ENCODE measurements at regions of chr5 and their contacts with region 1.

Region 1: GRCh38 chr5:142611154-142611553 is 74.7 kb downstream of the FGF1 start:
- DNase-seq: peak; percentile 73
- ATAC-seq: peak; percentile 94
- H3K4me3 ChIP-seq: no peak overlapping the region
- H3K27ac ChIP-seq: no peak overlapping the region
- H3K4me1 ChIP-seq: no peaks in the 10 kb centered on the region; the same call in 1 of the 2 replicates
- H3K27me3 ChIP-seq: no peaks in the 10 kb centered on the region
- CTCF ChIP-seq: peak; percentile 97

Region 2: DNA sequence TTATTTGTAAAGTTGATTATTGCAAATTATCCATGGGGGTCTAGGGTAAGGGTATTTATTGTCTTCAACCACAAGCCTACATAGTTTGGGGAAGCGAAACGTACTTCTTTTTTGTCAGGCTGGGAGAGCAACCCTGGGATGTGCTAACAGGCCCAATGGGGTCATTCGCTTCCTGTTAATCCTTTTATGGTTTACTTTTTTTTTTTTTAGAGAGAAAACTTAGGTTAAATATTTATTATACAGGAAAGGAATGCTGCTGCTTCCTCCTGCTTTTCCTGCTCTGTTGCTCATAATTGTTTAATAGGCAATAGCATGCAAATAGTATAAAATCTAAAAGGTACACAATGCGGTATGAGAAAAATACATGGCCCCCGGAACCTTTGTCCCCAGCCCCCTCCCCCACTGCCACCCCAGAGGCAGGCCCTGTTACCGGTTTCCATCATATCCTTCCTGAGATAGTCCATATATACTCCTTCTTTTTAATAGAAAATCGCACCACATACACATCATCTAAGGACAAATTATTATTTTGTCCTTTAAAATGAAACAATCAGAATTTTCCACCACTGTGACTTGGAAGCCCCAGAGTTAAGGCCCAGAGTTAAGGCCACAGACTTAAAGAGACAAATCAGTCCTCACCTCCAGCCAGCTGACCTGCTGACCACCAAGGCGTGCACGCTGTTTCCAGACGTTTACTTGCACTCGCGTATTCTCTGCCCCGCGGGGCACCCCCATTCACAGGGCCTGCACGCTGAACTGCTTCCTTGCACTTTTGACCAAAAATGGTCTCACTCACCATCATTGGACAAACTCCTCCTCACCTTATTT is 418.7 kb before region 1 on chr5:
- CTCF ChIA-PET with region 1: interaction called, 10 read pairs
- POLR2A ChIA-PET with region 1: no interaction called
- in situ Hi-C with region 1: no loop called
- intact Hi-C with region 1: no loop called
- DNase-seq: no peak
- ATAC-seq: no peak
- H3K4me3 ChIP-seq: no peak overlapping the region
- H3K27ac ChIP-seq: no peak overlapping the region
- H3K4me1 ChIP-seq: peaks cover 4% of the 10 kb centered on the region
- H3K27me3 ChIP-seq: no peaks in the 10 kb centered on the region
- CTCF ChIP-seq: no peak

Region 3: DNA sequence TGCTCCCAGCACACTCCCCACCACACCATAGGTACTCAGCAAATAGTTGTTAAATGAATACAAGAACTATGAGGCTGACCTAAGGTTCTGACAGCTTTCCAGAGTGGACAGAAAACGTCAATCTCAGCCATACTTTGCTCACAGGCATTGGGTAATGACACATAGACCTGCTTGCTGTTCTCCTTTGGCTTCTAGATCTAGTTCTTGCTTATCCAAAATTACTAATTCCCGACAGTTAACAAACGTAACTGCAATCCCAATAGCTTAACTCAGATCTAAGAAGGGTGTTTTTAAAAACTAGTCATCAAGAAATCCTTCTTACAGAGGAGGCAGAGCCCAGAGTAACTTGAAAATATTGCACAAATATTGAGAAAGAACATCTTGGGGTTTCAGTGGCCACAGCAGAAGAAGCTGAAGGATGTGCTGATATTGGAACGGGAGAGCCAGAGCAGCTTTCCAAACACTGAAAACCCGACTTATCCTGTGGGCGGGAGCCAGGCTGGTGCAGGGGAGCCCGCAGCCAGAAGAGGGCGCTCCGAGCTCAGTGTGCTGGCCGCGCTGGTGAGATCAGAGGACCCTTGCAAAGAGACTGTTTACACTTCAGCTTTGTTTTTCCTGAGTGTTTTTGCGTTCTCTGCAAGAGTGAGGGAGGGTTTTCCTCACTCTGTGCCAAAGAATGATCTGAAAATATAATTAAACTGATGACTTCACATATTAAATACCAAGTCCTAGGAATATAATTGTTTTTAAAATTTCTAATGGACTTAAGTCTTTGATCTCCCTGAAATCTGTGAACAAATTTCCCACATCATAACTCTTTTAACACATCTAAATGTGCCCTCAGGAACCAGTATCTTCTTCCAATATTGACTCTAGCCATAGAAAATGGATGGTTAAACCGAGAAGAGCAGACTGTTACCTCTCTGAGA is 44.4 kb after region 1 on chr5:
- CTCF ChIA-PET with region 1: interaction called, 12 read pairs
- POLR2A ChIA-PET with region 1: no interaction called
- in situ Hi-C with region 1: no loop called
- intact Hi-C with region 1: loop called (anchors 2 kb)
- DNase-seq: peak; percentile 45
- ATAC-seq: peak; percentile 95
- H3K4me3 ChIP-seq: no peak overlapping the region
- H3K27ac ChIP-seq: no peak overlapping the region
- H3K4me1 ChIP-seq: no peaks in the 10 kb centered on the region; the same call in 1 of the 2 replicates
- H3K27me3 ChIP-seq: no peaks in the 10 kb centered on the region
- CTCF ChIP-seq: peak; percentile 99

Region 4: DNA sequence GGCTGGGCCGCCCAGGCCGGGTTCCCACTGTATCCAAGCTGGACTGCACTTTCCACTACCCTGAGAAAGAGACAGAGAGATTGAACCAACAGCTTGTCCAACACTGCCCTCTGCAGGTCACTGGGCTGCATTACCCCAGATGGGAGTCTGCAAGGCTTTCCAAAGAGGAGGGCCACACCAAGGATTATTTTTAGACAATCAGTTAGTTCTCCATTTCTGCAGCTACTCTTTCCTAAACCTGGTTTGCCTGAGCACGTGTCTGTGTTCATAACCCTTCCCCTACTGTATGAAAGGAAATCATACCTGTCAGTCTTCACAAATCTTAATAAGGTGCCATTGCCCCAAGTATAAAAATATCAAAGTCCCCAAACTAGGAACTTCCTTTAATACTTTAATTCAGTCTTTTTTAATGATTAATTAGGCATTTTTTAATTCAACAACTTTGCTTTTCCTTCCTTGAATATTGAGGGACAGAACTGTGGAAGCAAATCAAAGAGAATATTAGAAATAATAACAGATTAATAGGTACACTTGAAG is 88.1 kb after region 1 on chr5:
- CTCF ChIA-PET with region 1: interaction called, 7 read pairs
- POLR2A ChIA-PET with region 1: no interaction called
- in situ Hi-C with region 1: no loop called
- intact Hi-C with region 1: loop called (anchors 1 kb)
- DNase-seq: peak; percentile 85
- ATAC-seq: peak; percentile 97
- H3K4me3 ChIP-seq: no peak overlapping the region
- H3K27ac ChIP-seq: no peak overlapping the region
- H3K4me1 ChIP-seq: no peaks in the 10 kb centered on the region; the same call in 1 of the 2 replicates
- H3K27me3 ChIP-seq: 0 out of 2 replicates have a peak, but pooled peaks cover 2% of the 10 kb centered on the region
- CTCF ChIP-seq: peak; percentile 96